Transverse colon (tissue), 4 donors: ENCODE measurements at regions of chr7 and their contacts with region 1.

Region 1: GRCh38 chr7:133650069-133650468 is 397.2 kb downstream of the EXOC4 start:
- DNase-seq: no peak
- H3K4me3 ChIP-seq: no peak overlapping the region
- H3K27ac ChIP-seq: no peak overlapping the region
- H3K4me1 ChIP-seq: peaks cover 4 to 30% (median 11%) of the 10 kb centered on the region in 4 donors
- H3K27me3 ChIP-seq: no peaks in the 10 kb centered on the region
- CTCF ChIP-seq: no peak
- EP300 ChIP-seq: no peak
- POLR2A ChIP-seq: no peak

Region 2: DNA sequence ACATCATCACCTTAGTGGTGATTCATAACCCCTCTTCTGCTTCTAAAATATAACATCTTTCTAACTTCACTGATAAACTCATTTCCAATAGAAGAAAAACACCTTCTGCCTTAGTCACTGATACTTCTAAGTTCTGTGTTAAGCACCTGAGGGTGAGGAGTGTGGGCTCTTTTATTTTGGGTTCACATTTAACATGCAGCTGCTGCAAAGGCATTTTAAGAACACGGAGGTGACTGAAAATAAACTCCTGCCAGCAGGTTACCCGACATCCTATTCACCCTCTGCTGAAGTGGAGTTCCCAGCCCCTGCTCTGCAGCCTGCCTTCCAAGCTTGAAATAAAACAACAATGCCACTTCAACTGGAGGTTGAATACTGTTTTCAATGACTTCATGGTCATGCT is 870.9 kb before region 1 on chr7:
- in situ Hi-C with region 1: no loop called
- intact Hi-C with region 1: loop called (anchors 5 kb)
- DNase-seq: no peak
- H3K4me3 ChIP-seq: no peak overlapping the region
- H3K27ac ChIP-seq: no peak overlapping the region
- H3K4me1 ChIP-seq: no peaks in the 10 kb centered on the region
- H3K27me3 ChIP-seq: no peaks in the 10 kb centered on the region
- CTCF ChIP-seq: no peak
- EP300 ChIP-seq: no peak
- POLR2A ChIP-seq: no peak

Region 3: GRCh38 chr7:133753513-133753912 is 103.4 kb after region 1 on chr7:
- in situ Hi-C with region 1: no loop called
- intact Hi-C with region 1: no loop called
- DNase-seq: no peak
- H3K4me3 ChIP-seq: no peak overlapping the region
- H3K27ac ChIP-seq: no peak overlapping the region
- H3K4me1 ChIP-seq: peaks cover 0 to 14% (median 4%) of the 10 kb centered on the region in 4 donors
- H3K27me3 ChIP-seq: no peaks in the 10 kb centered on the region
- CTCF ChIP-seq: no peak
- EP300 ChIP-seq: no peak
- POLR2A ChIP-seq: no peak